ENCODE measurements at regions of chr16 and their contacts with region 1.

Region 1: DNA sequence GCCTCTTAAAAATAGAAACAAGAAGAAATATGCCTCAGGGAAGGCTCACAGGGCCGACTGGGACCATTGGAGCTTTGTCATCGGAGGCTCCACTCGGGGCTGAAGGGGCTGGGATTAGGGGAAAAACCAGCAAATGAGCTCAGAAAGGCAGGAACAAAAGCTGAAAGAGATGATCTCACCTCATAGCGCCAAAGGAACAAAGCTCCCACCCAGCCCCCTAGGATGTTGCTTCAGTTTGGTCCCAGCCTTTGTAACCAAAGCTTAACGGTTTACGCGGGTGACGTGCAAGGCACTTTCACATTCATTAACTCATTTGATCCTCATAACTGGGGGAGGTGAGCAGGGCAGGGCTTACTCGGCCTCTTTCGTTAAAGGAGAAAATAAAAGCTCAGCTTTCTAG is 168.5 kb upstream of the DYNLRB2 start:
- DNase-seq: no peak
- H3K4me3 ChIP-seq: no peak overlapping the region
- H3K27ac ChIP-seq: no peak overlapping the region
- H3K4me1 ChIP-seq: no peaks in the 10 kb centered on the region
- H3K27me3 ChIP-seq: no peaks in the 10 kb centered on the region
- CTCF ChIP-seq: no peak

Region 2: GRCh38 chr16:80231888-80232287 is 140.5 kb before region 1 on chr16:
- CTCF ChIA-PET with region 1: no interaction called
- POLR2A ChIA-PET with region 1: no interaction called
- intact Hi-C with region 1: loop called (anchors 5 kb)
- DNase-seq: no peak
- H3K4me3 ChIP-seq: no peak overlapping the region
- H3K27ac ChIP-seq: no peak overlapping the region
- H3K4me1 ChIP-seq: no peaks in the 10 kb centered on the region
- H3K27me3 ChIP-seq: no peaks in the 10 kb centered on the region
- CTCF ChIP-seq: no peak

Region 3: DNA sequence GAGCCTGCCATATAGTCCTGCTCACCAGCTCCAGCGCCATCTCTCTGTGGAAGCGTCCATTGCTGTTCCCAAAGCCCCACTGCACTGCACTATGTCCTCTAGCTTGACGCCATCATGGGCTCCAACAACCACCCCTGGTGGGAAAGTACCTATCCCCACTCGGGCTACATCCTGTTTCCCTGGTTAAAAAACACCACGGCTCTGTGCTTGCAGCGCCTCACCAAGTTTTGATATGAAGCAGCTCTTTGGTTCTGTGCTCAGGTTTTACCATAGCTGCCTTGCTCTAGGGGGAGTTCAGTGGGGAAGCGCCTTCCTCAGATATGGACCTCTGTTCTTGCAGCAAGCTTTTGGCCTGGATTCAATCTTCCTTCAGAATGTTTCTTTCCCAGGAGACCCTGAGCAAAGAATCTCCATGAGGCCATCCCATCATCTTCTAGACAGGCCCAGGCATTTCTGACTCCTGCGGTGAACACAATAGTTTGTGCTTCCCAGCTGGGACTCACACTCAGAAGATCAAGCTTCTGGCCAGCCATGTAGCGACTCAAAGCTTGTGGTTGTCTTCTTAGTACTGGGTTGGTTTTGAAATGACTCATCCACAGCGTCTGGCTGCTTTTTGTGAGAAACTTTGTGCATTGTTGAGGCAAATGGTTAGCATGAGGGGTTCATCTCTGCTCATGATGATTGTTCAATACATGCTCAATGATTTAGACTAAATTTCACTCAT is 207.9 kb after region 1 on chr16:
- CTCF ChIA-PET with region 1: no interaction called
- POLR2A ChIA-PET with region 1: no interaction called
- intact Hi-C with region 1: no loop called
- DNase-seq: no peak
- H3K4me3 ChIP-seq: no peak overlapping the region
- H3K27ac ChIP-seq: no peak overlapping the region
- H3K4me1 ChIP-seq: no peaks in the 10 kb centered on the region
- H3K27me3 ChIP-seq: no peaks in the 10 kb centered on the region
- CTCF ChIP-seq: no peak

Measured in A673 (cell line).